H1 (cell line): ENCODE measurements at regions of chr6 and their contacts with region 1.

Region 1: GRCh38 chr6:31580807-31581433 is 1.3 kb downstream of the LTB start:
- DNase-seq: peak; percentile 38 to 96
- H3K4me3 ChIP-seq: peak overlapping the region; percentile 54 to 89 (median 80)
- H3K27ac ChIP-seq: no peak overlapping the region
- H3K4me1 ChIP-seq: peaks cover 0 to 6% (median 6%) of the 10 kb centered on the region in 4 experiments; a peak in 6 of 7 replicates
- H3K27me3 ChIP-seq: peaks cover 0 to 8% (median 7%) of the 10 kb centered on the region in 4 experiments; a peak in 5 of 7 replicates
- CTCF ChIP-seq: peak in 2 of 3 experiments; percentile 89 to 93; a peak in 3 of 4 replicates
- EP300 ChIP-seq: no peak
- POLR2A ChIP-seq: 0 out of 3 replicates have a peak, but pooled peaks of 1 of the 2 experiments have one; percentile 18
- RAD21 ChIP-seq: peak; percentile 39 to 66

Region 2: GRCh38 chr6:31559958-31560696 is 20.8 kb before region 1 on chr6:
- CTCF ChIA-PET with region 1: interaction called, 26 read pairs
- POLR2A ChIA-PET with region 1: interaction called, 110 read pairs
- DNase-seq: no peak
- H3K4me3 ChIP-seq: no peak overlapping the region
- H3K27ac ChIP-seq: no peak overlapping the region
- H3K4me1 ChIP-seq: no peaks in the 10 kb centered on the region
- H3K27me3 ChIP-seq: no peaks in the 10 kb centered on the region
- CTCF ChIP-seq: no peak
- EP300 ChIP-seq: no peak
- POLR2A ChIP-seq: no peak
- RAD21 ChIP-seq: no peak

Region 3: GRCh38 chr6:31568537-31568961 is 12.4 kb before region 1 on chr6:
- CTCF ChIA-PET with region 1: interaction called, 640 read pairs
- POLR2A ChIA-PET with region 1: interaction called, 110 read pairs
- DNase-seq: no peak
- H3K4me3 ChIP-seq: no peak overlapping the region
- H3K27ac ChIP-seq: no peak overlapping the region
- H3K4me1 ChIP-seq: no peaks in the 10 kb centered on the region; a peak in 2 of 7 replicates
- H3K27me3 ChIP-seq: no peaks in the 10 kb centered on the region
- CTCF ChIP-seq: no peak
- EP300 ChIP-seq: no peak
- POLR2A ChIP-seq: no peak
- RAD21 ChIP-seq: no peak